Heart right ventricle (tissue), 16 donors: ENCODE measurements at regions of chr9 and their contacts with region 1.

Region 1: DNA sequence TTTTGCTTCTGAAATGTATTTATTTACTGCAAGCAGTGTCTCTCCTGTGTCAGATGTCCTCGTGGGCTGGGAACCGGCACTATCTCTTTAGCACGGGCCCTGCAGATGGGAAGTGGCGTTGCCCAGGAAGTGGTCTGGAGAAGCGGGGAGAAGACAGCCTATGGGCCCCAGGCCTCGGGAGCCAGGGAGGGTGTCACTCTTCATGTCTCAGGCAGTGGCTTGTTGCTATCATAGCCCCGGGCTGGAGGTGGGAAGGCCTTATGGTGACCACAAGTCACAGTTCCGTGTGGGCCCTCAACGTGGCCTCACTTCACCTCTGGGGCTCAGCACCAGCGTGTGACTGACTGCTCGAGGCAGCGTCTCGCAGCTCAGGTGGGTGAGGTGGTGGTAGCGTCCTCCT is 41.4 kb downstream of the SYK start:
- DNase-seq: no peak
- ATAC-seq: peak in 1 of 8 donors; percentile 38
- H3K4me3 ChIP-seq: no peak overlapping the region
- H3K27ac ChIP-seq: no peak overlapping the region
- H3K4me1 ChIP-seq: peaks cover 0 to 10% (median 0%) of the 10 kb centered on the region in 9 donors
- H3K27me3 ChIP-seq: no peaks in the 10 kb centered on the region
- CTCF ChIP-seq: no peak

Region 2: DNA sequence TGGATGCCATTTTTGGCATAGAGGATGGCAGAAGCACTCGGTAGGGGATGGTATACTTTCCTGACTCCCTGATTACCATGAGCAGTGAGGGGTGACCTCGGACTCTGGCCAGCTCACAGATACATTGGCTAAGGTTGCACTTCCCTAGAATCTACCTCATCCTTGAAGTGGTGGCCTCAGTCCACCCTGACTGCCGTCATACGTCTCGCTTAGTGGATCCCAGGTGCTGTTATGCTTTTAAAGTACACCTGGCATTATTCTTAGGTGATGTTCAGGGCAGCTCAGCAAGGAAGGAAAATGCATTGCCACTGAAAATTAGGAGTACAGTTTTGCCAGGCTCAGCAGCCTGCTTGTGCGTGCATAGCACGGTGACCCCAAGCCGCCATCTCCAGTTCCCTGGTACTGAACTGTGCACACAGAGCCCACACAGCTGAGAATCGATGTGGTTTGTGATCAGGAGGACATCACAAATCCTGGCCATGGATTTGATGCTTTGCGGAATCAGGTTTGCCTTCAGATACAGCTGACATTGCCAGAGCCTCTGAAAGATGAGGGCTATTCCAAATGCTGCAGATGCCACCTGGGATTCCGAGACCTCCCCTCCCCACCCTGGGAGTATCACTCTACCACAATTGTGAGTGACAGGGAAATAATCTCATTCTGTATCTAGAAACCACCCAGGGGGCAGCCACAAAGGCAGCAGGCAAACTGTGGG is 46.1 kb after region 1 on chr9:
- intact Hi-C with region 1: no loop called
- DNase-seq: no peak
- ATAC-seq: no peak
- H3K4me3 ChIP-seq: no peak overlapping the region
- H3K27ac ChIP-seq: no peak overlapping the region
- H3K4me1 ChIP-seq: no peaks in the 10 kb centered on the region
- H3K27me3 ChIP-seq: peaks cover 0 to 24% (median 0%) of the 10 kb centered on the region in 7 donors
- CTCF ChIP-seq: no peak

Region 3: GRCh38 chr9:90900130-90900529 is 57.1 kb after region 1 on chr9:
- intact Hi-C with region 1: loop called in 1 of 10 experiments (anchors 10 kb)
- DNase-seq: peak; percentile 48 to 63
- ATAC-seq: peak; percentile 88 to 98 (median 92)
- H3K4me3 ChIP-seq: no peak overlapping the region
- H3K27ac ChIP-seq: peak overlapping the region in 3 of 10 donors; percentile 26 to 53 (median 39)
- H3K4me1 ChIP-seq: peaks cover 0 to 10% (median 3%) of the 10 kb centered on the region in 9 donors
- H3K27me3 ChIP-seq: no peaks in the 10 kb centered on the region
- CTCF ChIP-seq: peak; percentile 39 to 73 (median 53)

Region 4: GRCh38 chr9:90946975-90947374 is 104.0 kb after region 1 on chr9:
- intact Hi-C with region 1: no loop called
- DNase-seq: no peak
- ATAC-seq: no peak
- H3K4me3 ChIP-seq: no peak overlapping the region
- H3K27ac ChIP-seq: no peak overlapping the region
- H3K4me1 ChIP-seq: no peaks in the 10 kb centered on the region
- H3K27me3 ChIP-seq: peaks cover 0 to 25% (median 7%) of the 10 kb centered on the region in 7 donors
- CTCF ChIP-seq: no peak